HCT116 (cell line): ENCODE measurements at regions of chr5 and their contacts with region 1.

Region 1: GRCh38 chr5:131382407-131383395 is 118.8 kb downstream of the CDC42SE2 start:
- DNase-seq: peak; percentile 50
- ATAC-seq: peak; percentile 97
- H3K4me3 ChIP-seq: no peak overlapping the region
- H3K27ac ChIP-seq: no peak overlapping the region
- H3K4me1 ChIP-seq: peaks cover 2 to 9% of the 10 kb centered on the region in 2 experiments; a peak in 2 of 4 replicates
- H3K27me3 ChIP-seq: no peaks in the 10 kb centered on the region
- CTCF ChIP-seq: peak; percentile 51 to 72 (median 67); a peak in 5 of 6 replicates
- POLR2A ChIP-seq: no peak
- RAD21 ChIP-seq: peak; percentile 83

Region 2: DNA sequence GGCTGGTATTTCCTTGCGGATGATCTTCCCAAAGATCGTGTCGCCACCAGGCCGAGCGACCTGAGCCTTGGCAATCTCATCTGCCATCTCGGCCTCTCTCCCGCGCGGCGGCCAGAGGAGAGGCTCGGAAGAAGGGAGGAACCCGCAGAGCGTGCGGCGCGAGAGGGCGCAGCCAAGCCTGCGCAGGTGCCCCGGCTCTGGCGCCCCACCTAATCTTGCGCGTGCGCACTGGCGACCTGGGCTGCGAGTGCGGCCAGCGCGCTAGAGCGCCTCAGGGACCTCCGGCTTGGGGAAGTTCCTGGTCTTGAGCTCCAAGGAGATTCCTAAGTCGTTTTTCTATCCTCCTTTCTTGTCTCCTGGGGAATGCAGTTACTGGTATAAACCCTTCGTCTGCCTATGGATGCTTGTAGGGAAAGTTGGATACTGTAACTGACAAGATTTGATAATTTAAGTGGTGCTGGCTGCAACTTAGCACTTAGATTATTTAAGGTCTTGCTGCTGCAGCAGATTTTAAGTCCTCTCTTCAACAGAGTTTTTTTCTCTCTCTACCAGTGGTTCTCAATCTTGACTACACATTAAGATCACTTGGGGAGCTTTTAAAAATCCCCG is 217.5 kb before region 1 on chr5 and contains the start of gene HINT1:
- CTCF ChIA-PET with region 1: interaction called, 6 read pairs
- POLR2A ChIA-PET with region 1: no interaction called
- RAD21 ChIA-PET with region 1: interaction called in 1 of 2 experiments, 3 read pairs
- intact Hi-C with region 1: loop called (anchors 2 kb)
- DNase-seq: peak; percentile 79
- ATAC-seq: peak; percentile 93
- H3K4me3 ChIP-seq: peak within 1 kb of the TSS; percentile 87 to 95
- H3K27ac ChIP-seq: peak within 1 kb of the TSS; percentile 89
- H3K4me1 ChIP-seq: peaks cover 4 to 19% of the 10 kb centered on the region in 2 experiments; a peak in 3 of 4 replicates
- H3K27me3 ChIP-seq: no peaks in the 10 kb centered on the region
- CTCF ChIP-seq: no peak
- POLR2A ChIP-seq: peak; percentile 94
- RAD21 ChIP-seq: no peak
- total RNA-seq, gene HINT1: 222 TPM